ENCODE measurements at regions of chr18 and their contacts with region 1.

Region 1: DNA sequence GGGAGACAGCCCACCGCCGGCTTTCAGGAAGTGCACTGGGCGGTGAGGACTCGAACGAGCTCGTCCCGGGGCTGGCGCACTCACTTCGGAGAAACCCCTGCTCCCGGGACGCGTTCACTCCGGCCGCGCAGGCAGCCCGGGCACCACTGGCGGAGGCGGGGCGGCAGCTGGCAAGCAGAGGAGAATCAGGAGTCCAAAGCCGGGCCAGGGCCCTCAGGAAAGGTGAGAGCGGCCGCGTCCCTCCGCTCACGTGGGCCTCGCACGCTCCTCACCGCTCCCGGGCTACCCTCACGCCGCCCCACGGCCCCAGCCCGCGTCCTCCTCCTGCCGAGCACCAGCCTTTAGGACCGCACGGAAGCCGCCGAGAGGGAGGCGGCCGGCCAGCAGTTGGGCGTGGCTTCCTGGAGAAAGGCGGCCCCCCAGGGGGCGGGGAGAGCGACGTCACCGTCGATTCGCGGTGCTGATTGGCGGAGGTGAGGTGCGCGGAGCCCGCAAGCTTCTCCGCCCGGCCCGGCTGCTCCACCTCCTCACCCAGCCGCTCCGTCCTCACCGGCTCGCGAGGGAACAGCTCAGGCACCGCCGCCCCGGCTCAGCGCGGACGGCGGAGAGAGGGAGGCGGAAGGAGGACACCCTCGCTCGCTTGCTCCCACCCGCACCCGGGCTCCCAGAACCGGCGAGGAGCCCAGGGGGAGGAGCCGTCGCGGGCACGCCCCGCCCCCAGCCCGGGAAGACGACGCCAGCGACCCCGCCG is at the start of gene ZCCHC2:
- DNase-seq: peak; percentile 99
- ATAC-seq: peak; percentile 95
- H3K4me3 ChIP-seq: peak within 1 kb of the TSS; percentile 89 to 97
- H3K27ac ChIP-seq: peak within 1 kb of the TSS; percentile 90 to 93
- H3K4me1 ChIP-seq: no peaks in the 10 kb centered on the region
- H3K27me3 ChIP-seq: no peaks in the 10 kb centered on the region
- total RNA-seq, gene ZCCHC2: 33.5 to 34.7 TPM

Region 2: GRCh38 chr18:62399781-62400308 is 122.8 kb before region 1 on chr18:
- intact Hi-C with region 1: no loop called
- DNase-seq: no peak
- ATAC-seq: no peak
- H3K4me3 ChIP-seq: no peak overlapping the region
- H3K27ac ChIP-seq: no peak overlapping the region
- H3K4me1 ChIP-seq: no peaks in the 10 kb centered on the region
- H3K27me3 ChIP-seq: no peaks in the 10 kb centered on the region

Region 3: DNA sequence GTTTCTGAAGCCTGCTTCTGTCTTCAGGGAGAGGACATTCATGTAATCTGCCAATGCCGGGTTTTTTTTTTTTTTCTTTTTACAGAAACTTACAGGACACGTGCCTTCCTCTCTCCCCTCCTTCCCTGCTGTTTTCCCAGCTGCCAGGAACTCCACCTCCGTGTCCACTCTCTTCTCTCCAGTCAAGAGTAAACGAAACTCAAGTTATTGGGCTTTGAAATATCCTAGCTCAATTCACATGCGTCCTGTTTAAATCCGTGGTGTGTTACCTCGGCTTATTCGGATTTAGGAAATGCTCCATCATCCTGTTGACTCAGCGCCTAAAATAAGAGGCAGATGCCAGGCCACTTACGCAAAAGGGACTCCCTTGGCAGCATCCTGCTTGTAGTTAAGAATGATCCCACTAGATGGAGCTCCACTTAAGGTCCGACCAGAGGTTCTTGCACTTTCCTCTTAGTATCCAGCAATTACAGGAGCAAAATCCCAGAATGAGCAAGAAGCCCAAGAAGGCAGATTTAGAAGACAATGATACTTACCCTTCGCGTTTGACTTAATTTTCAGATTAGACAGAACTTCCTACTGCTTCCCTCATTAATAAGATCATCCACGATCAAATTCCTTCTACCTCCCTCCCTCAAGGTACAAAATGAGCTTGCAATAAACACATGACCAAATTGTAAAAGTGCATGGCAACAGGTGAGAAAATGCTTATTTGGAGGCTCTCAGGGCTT is 97.0 kb before region 1 on chr18:
- intact Hi-C with region 1: loop called (anchors 1 to 5 kb)
- DNase-seq: peak in 1 of 2 donors; percentile 75
- ATAC-seq: peak; percentile 97
- H3K4me3 ChIP-seq: peak overlapping the region; percentile 25 to 36
- H3K27ac ChIP-seq: peak overlapping the region in 1 of 2 donors; percentile 83
- H3K4me1 ChIP-seq: peaks cover 0 to under 1% of the 10 kb centered on the region in 2 donors
- H3K27me3 ChIP-seq: no peaks in the 10 kb centered on the region

Region 4: GRCh38 chr18:62437235-62438017 is 85.3 kb before region 1 on chr18:
- intact Hi-C with region 1: loop called (anchors 1 to 5 kb)
- DNase-seq: peak; percentile 96 to 97
- ATAC-seq: peak; percentile 94
- H3K4me3 ChIP-seq: no peak overlapping the region
- H3K27ac ChIP-seq: peak overlapping the region; percentile 64 to 97
- H3K4me1 ChIP-seq: peaks cover 0 to 3% of the 10 kb centered on the region in 2 donors
- H3K27me3 ChIP-seq: no peaks in the 10 kb centered on the region

Region 5: DNA sequence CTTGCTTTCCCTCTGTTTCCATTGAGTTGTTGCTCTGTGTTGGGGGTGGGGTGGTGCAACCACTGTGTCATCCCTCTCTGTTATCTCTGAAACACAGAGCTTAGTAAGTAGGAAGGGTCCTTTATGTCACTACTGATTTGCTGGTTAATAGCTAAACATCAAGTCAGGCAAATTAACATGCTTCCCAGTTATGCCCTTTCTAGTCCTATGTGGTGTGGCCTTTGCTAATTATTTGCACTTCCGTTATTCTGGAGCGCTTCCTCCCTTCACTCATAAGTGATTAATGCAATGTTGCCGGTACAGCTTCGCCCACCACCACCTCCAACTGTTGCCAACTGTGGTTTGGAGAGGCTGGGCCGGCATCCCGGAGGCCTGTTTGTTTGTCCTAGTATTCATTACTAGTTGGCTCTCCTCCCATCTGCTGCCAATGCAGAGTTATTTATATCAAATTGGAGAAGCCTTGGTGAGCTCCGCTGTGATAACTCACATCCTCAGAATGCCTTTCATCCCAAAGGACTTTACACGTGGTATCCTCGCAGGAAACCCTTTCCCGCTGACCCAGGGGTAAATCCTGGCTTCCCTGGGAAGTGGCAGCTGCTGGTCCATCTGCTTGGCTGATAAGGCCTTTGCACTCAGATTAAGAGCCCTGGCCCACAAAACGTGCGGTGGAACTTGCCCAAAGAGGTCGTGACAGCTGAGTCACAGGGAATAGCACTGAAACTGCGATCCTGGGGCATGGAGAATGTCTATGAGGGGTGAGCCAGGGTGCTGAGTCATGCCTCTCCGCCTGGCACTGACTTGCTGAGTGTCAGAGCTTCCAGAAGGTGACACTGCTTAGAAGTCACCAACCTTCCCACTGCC is 71.9 kb before region 1 on chr18:
- intact Hi-C with region 1: loop called in 1 of 2 experiments (anchors 5 kb)
- DNase-seq: peak; percentile 92 to 94
- ATAC-seq: peak; percentile 93
- H3K4me3 ChIP-seq: no peak overlapping the region
- H3K27ac ChIP-seq: peak overlapping the region in 1 of 2 donors; percentile 39
- H3K4me1 ChIP-seq: peaks cover 3 to 4% of the 10 kb centered on the region in 2 donors
- H3K27me3 ChIP-seq: no peaks in the 10 kb centered on the region